Activated CD8-positive, alpha-beta T cell treated with anti-CD3 and anti-CD28 coated beads for 36 hours (primary cell): ENCODE measurements at regions of chr12 and their contacts with region 1.

Region 1: DNA sequence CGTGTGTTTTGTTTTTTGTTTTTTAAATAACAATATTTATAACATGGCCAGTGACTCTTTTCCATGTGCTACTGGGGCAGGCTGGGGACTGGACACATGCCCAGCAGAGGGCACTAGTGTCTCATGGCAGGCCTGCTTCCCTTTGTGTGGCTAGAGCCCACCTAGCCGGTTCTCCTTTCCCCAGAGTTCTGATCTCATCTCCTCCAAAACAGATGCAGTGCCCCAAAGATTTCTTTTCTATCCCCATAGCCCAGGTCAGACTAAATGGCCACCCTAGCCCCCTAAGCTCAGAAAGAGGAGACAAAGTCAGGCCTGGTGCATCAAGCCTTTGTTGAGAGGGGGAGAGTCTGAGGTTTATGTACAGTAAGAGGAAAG is 21.2 kb downstream of the PRPF40B start:
- DNase-seq: peak; percentile 88
- ATAC-seq: peak; percentile 96
- H3K4me3 Mint-ChIP-seq: no peak overlapping the region
- H3K27ac Mint-ChIP-seq: peak overlapping the region; percentile 77
- H3K4me1 Mint-ChIP-seq: peaks cover 15% of the 10 kb centered on the region
- H3K27me3 Mint-ChIP-seq: no peaks in the 10 kb centered on the region
- CTCF ChIP-seq: peak; percentile 92

Region 2: GRCh38 chr12:49188914-49189367 is 455.7 kb before region 1 on chr12 and contains the start of gene TUBA1A:
- CTCF ChIA-PET with region 1: no interaction called
- POLR2A ChIA-PET with region 1: no interaction called
- intact Hi-C with region 1: no loop called
- DNase-seq: peak; percentile 99
- ATAC-seq: peak; percentile 92
- H3K4me3 Mint-ChIP-seq: peak within 1 kb of the TSS; percentile 95
- H3K27ac Mint-ChIP-seq: peak within 1 kb of the TSS; percentile 97
- H3K4me1 Mint-ChIP-seq: peaks cover 16% of the 10 kb centered on the region
- H3K27me3 Mint-ChIP-seq: no peaks in the 10 kb centered on the region
- CTCF ChIP-seq: no peak
- total RNA-seq, gene TUBA1A: 70.6 to 71.2 TPM

Region 3: GRCh38 chr12:49578471-49579112 is 66.0 kb before region 1 on chr12:
- CTCF ChIA-PET with region 1: no interaction called
- POLR2A ChIA-PET with region 1: no interaction called
- intact Hi-C with region 1: no loop called
- DNase-seq: no peak
- ATAC-seq: no peak
- H3K4me3 Mint-ChIP-seq: no peak overlapping the region
- H3K27ac Mint-ChIP-seq: no peak overlapping the region
- H3K4me1 Mint-ChIP-seq: peaks cover 15% of the 10 kb centered on the region
- H3K27me3 Mint-ChIP-seq: no peaks in the 10 kb centered on the region
- CTCF ChIP-seq: no peak

Region 4: GRCh38 chr12:49662998-49663843 is 18.6 kb after region 1 on chr12:
- CTCF ChIA-PET with region 1: interaction called, 15 read pairs
- POLR2A ChIA-PET with region 1: interaction called, 3 read pairs
- intact Hi-C with region 1: no loop called
- DNase-seq: peak; percentile 88
- ATAC-seq: peak; percentile 92
- H3K4me3 Mint-ChIP-seq: peak overlapping the region; percentile 67
- H3K27ac Mint-ChIP-seq: peak overlapping the region; percentile 97
- H3K4me1 Mint-ChIP-seq: peaks cover 79% of the 10 kb centered on the region
- H3K27me3 Mint-ChIP-seq: no peaks in the 10 kb centered on the region
- CTCF ChIP-seq: no peak

Region 5: DNA sequence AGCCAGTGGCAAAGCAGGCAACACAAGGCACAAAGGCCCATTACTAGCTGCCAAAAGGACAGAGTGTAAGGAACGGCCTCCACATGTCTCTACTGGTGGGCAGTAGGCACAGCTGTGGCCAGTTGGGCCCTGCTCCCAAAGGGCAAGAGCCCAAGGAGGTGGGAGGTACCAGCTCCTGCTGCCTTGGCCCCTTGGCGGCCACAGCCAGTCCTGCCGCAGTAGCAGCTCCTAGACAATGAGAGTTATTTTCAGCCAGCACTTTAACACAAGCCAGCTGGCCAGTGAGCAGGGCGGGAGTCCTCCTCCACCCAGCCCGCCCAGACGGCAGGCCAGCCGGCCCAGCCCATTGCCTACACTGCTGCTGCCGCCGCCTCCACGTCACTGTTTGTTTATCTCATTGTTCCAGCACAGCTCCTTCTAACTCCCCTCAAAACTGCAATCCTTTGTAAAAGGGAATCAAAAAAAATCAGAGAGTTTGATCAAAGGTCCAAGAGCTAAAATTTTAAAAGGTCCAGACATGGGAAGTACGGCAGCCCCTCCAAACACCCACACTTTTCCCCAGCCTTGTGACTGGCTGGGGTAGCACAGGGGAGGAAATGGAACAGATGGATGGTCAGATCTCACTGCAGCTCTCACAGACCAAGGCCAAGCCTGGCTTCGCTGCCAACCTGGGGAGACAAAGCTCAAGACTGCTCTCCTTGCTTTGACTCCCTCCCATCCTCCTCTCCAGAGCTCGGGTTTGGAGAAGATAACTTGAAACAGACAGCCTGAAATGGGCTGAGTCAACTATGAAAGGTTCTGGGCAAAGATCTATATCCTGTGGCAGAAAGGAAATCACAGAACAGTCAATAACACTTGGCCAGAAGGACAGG is 29.1 kb after region 1 on chr12:
- CTCF ChIA-PET with region 1: interaction called, 26 read pairs
- POLR2A ChIA-PET with region 1: interaction called, 3 read pairs
- intact Hi-C with region 1: no loop called
- DNase-seq: no peak
- ATAC-seq: peak; percentile 32
- H3K4me3 Mint-ChIP-seq: peak overlapping the region; percentile 16
- H3K27ac Mint-ChIP-seq: peak overlapping the region; percentile 97
- H3K4me1 Mint-ChIP-seq: peaks cover 81% of the 10 kb centered on the region
- H3K27me3 Mint-ChIP-seq: no peaks in the 10 kb centered on the region
- CTCF ChIP-seq: no peak

Region 6: DNA sequence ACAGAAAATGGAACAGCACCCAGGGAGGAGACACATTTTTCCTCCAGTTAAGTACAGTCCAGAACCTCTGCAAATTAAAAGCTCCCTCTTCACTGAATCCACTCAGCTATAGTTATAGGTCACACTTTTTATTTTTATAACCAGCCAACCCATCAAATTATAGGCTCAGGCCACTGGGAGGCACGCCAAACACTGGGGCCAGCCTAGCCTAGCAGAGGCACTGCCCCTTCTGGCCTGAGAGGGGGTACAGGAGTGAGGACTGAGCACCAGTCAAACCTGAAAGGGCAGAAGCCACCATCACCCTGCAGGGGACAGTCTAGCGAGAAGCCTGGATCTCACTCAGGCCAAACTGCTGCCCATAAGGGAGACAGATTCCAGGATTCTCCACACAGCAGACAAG is 43.3 kb after region 1 on chr12:
- CTCF ChIA-PET with region 1: interaction called, 23 read pairs
- POLR2A ChIA-PET with region 1: no interaction called
- intact Hi-C with region 1: no loop called
- DNase-seq: no peak
- ATAC-seq: no peak
- H3K4me3 Mint-ChIP-seq: no peak overlapping the region
- H3K27ac Mint-ChIP-seq: no peak overlapping the region
- H3K4me1 Mint-ChIP-seq: peaks cover 54% of the 10 kb centered on the region
- H3K27me3 Mint-ChIP-seq: no peaks in the 10 kb centered on the region
- CTCF ChIP-seq: no peak

Region 7: DNA sequence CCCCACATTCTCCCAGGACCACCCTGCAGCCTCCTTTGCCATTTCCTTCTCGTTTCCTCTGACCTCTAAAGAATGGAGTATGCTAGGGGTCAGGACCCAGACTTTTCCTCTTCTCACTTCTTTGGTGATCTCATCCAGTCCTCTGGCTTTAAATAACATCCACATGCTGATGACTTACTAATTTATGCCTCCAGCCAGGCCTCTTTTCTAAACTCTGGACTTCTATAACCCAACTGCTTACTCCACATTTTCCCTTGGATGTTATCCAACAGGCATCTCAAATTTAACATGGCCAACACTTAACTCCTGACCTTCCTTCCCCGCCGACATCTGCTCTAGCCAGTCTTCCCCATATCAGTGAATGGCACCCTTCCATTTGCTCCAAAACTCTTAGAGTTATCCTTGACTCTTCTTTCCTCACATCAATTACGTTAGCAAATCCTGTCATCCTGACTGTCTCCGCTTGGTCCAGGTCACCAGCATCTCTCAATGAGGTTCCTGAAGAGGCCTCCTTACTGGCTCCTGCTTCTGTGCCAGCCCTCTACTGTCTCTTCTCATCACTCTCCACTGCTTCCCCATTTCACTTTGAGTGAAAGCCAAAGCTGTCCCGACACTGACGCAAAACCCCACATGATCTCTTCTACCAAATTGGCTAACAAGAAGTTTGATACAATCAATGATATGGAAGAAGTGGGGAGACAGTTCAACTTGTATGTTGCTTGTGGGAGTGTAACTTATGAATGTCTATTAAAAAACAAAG is 139.5 kb after region 1 on chr12:
- CTCF ChIA-PET with region 1: no interaction called
- POLR2A ChIA-PET with region 1: no interaction called
- intact Hi-C with region 1: no loop called
- DNase-seq: no peak
- ATAC-seq: no peak
- H3K4me3 Mint-ChIP-seq: no peak overlapping the region
- H3K27ac Mint-ChIP-seq: no peak overlapping the region
- H3K4me1 Mint-ChIP-seq: no peaks in the 10 kb centered on the region
- H3K27me3 Mint-ChIP-seq: peaks cover 13% of the 10 kb centered on the region
- CTCF ChIP-seq: no peak